ENCODE measurements at regions of chr11 and their contacts with region 1.

Region 1: DNA sequence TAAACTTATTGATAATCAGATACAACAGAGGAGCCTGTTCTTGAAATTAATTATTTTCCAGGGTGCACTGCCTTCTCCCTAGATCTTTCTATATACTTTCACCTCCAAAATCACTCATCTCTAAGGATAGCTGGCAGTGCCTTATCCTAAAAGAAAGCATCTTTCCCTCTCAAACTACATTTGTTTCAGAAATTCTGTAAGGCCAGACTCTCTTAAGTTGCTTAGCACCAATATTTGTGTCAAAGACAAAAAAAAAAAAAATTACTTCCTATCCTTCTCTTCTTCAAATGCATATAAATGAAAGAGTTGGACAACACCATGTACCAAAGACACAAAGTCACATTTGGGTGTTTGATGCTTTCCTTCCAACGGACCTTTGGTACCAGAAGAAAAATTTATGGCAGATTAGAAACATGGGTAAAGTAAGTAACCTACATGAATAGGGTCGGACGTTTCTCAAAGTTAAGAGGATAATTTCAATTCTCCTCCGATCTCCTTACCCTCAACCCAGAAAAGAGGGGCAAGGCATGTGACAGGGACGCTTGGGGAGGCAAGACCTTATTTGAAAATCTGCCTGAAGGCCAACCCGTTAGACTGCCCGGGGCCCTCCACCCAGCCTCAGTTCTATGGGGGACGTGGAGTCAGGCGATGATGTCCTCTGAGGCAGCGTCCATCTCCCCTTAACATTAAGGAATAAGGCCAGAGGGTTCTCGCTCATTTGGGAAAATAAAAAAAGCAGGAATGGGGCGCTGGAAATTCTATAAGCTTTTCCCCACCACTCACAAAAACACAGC is 66.3 kb downstream of the ETS1 start:
- DNase-seq: peak in 2 of 3 donors; percentile 25 to 40
- H3K4me3 ChIP-seq: peak overlapping the region; percentile 76 to 95 (median 85)
- H3K27ac ChIP-seq: peak overlapping the region in 1 of 2 experiments; percentile 75
- H3K4me1 ChIP-seq: peaks cover 33 to 58% (median 36%) of the 10 kb centered on the region in 4 experiments
- H3K27me3 ChIP-seq: no peaks in the 10 kb centered on the region

Region 2: GRCh38 chr11:128315933-128316332 is 205.2 kb before region 1 on chr11:
- CTCF ChIA-PET with region 1: no interaction called
- POLR2A ChIA-PET with region 1: no interaction called
- DNase-seq: peak in 2 of 3 donors; percentile 70 to 80
- H3K4me3 ChIP-seq: no peak overlapping the region
- H3K27ac ChIP-seq: no peak overlapping the region
- H3K4me1 ChIP-seq: peaks cover 2 to 11% (median 7%) of the 10 kb centered on the region in 4 experiments
- H3K27me3 ChIP-seq: no peaks in the 10 kb centered on the region

Region 3: DNA sequence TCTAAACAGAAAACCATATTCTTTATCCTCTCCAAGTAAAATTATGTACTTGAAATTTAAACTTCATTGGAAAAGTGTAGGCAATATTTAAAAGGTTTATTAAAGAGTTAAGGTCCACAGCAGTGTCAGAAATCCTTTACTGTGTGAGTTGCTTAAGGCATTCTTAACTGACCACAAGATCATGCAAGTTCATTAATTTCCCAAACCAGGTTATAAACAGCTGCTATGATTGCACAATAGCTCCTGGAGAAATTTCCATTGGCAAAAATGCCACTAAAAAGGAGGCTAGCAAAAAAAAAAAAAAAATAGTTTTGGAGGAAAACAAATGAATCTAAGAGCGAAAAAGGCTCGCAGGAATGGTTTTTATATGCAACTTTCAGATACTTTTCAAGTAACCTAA is 40.0 kb before region 1 on chr11:
- CTCF ChIA-PET with region 1: no interaction called
- POLR2A ChIA-PET with region 1: no interaction called
- DNase-seq: no peak
- H3K4me3 ChIP-seq: no peak overlapping the region
- H3K27ac ChIP-seq: no peak overlapping the region
- H3K4me1 ChIP-seq: peaks cover 0 to 3% (median 0%) of the 10 kb centered on the region in 4 experiments
- H3K27me3 ChIP-seq: no peaks in the 10 kb centered on the region

Region 4: DNA sequence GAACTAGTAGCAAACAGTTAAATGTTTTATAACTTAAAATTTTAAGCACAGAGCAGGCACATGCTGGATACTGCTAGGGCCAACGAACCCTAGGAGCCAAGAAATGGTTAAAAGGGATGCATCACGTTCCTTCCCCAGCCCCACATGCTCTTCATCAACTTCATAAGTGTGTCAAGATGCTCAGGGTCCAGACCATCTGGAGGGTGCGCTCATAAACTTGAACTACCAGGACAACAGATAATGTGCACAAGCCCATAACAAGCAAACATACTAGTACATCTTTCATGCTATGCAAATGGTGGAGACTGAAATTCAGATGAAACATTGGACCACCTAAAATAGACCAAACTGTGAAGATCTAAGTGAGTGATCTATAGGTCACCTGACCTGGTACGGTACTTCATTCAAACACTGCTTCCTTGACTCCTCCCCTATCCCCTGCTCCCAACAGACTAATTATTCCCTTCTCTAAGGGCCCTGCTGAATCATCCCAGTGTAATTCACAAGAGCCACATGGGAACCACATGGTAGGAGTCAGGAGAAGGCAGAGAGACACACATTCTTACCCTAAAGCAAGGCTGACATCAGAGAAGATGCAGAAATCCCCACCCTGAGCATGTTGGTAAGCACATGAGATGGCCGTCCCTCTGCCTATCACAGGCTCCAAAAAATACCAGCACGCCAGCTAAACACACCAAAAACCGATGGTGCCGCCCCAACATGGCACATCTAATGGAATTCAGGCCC is 17.7 kb before region 1 on chr11:
- CTCF ChIA-PET with region 1: interaction called, 12 read pairs
- POLR2A ChIA-PET with region 1: no interaction called
- DNase-seq: no peak
- H3K4me3 ChIP-seq: no peak overlapping the region
- H3K27ac ChIP-seq: no peak overlapping the region
- H3K4me1 ChIP-seq: peaks cover 2 to 34% (median 22%) of the 10 kb centered on the region in 4 experiments
- H3K27me3 ChIP-seq: no peaks in the 10 kb centered on the region

Region 5: GRCh38 chr11:128508770-128509510 is 12.1 kb before region 1 on chr11:
- CTCF ChIA-PET with region 1: interaction called, 12 read pairs
- POLR2A ChIA-PET with region 1: no interaction called
- DNase-seq: no peak
- H3K4me3 ChIP-seq: no peak overlapping the region
- H3K27ac ChIP-seq: no peak overlapping the region
- H3K4me1 ChIP-seq: peaks cover 0 to 33% (median 18%) of the 10 kb centered on the region in 4 experiments
- H3K27me3 ChIP-seq: no peaks in the 10 kb centered on the region

Region 6: GRCh38 chr11:128695539-128696221 is 174.6 kb after region 1 on chr11:
- CTCF ChIA-PET with region 1: no interaction called
- POLR2A ChIA-PET with region 1: no interaction called
- DNase-seq: peak; percentile 86 to 95 (median 92)
- H3K4me3 ChIP-seq: peak overlapping the region; percentile 86 to 96 (median 91)
- H3K27ac ChIP-seq: peak overlapping the region; percentile 70 to 83
- H3K4me1 ChIP-seq: peaks cover 28 to 82% (median 76%) of the 10 kb centered on the region in 4 experiments
- H3K27me3 ChIP-seq: no peaks in the 10 kb centered on the region

Region 7: DNA sequence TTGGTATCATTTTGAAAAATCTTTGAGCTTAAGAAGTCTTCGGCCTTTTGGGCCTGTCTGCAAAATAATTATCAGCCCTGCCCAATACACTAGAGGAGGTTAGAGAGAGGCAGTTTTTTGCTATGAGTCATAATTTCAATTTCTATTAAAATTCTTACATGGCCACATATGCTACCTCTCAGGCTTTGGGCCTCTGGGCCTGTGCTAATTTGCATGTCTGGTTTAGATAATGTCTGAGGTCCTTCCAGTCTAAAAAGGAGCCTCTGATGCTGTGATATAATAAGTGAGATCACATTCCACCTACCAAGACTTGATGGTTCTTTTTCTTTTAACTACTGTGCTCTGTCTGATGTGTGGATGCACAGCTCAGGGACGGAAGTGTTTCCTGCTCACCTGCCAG is 275.2 kb after region 1 on chr11:
- CTCF ChIA-PET with region 1: no interaction called
- POLR2A ChIA-PET with region 1: no interaction called
- DNase-seq: no peak
- H3K4me3 ChIP-seq: no peak overlapping the region
- H3K27ac ChIP-seq: no peak overlapping the region
- H3K4me1 ChIP-seq: no peaks in the 10 kb centered on the region
- H3K27me3 ChIP-seq: no peaks in the 10 kb centered on the region